Activated naive CD4-positive, alpha-beta T cell treated with anti-CD3 and anti-CD28 coated beads, Interleukin-2, amount 10 ng/mL, durations not matched to agents 7 days and 5 days (primary cell): ENCODE measurements at regions of chr14 and their contacts with region 1.

Region 1: GRCh38 chr14:95534299-95535225 is at the start of gene GLRX5:
- DNase-seq: peak; percentile 99
- H3K4me3 Mint-ChIP-seq: peak within 1 kb of the TSS; percentile 84
- H3K27ac Mint-ChIP-seq: peak within 1 kb of the TSS; percentile 92
- H3K4me1 Mint-ChIP-seq: peaks cover 67% of the 10 kb centered on the region
- H3K27me3 Mint-ChIP-seq: no peaks in the 10 kb centered on the region

Region 2: DNA sequence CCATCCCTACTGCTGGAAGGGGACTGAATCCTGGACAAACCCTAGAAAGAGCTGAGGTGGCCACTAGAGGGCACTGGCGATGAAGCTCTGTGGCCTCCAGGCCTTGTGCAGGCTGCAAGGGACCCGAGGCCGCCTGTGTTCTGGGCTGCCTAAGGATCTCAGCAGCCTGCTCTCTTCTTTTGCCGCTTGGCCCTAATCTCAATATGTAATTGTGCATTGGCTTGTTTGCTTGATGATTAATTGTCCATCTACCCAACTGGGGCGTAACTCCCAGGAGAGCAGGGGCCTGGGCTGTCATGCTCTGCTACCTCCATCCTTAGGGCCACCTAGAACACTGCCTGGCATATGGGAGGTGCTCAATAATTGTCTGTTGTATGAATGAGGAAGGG is 91.9 kb before region 1 on chr14:
- CTCF ChIA-PET with region 1: interaction called, 20 read pairs
- DNase-seq: peak; percentile 84
- H3K4me3 Mint-ChIP-seq: no peak overlapping the region
- H3K27ac Mint-ChIP-seq: peak overlapping the region; percentile 35
- H3K4me1 Mint-ChIP-seq: peaks cover 7% of the 10 kb centered on the region
- H3K27me3 Mint-ChIP-seq: no peaks in the 10 kb centered on the region